ENCODE measurements at regions of chr19 and their contacts with region 1.

Region 1: GRCh38 chr19:57279418-57280066 is 743 bp upstream of the ZNF460 start:
- DNase-seq: peak; percentile 88 to 93 (median 90)
- H3K4me3 ChIP-seq: peak overlapping the region; percentile 99
- H3K27ac ChIP-seq: peak overlapping the region; percentile 91 to 96
- H3K4me1 ChIP-seq: peaks cover 4% of the 10 kb centered on the region
- H3K27me3 ChIP-seq: no peaks in the 10 kb centered on the region
- CTCF ChIP-seq: peak in 1 of 3 donors; percentile 8
- EP300 ChIP-seq: peak; percentile 98
- POLR2A ChIP-seq: peak; percentile 76

Region 2: GRCh38 chr19:57240311-57241090 is 39.0 kb before region 1 on chr19 and contains the start of gene ZNF805:
- intact Hi-C with region 1: loop called in 1 of 4 experiments (anchors 5 kb)
- DNase-seq: peak; percentile 95 to 97 (median 96)
- H3K4me3 ChIP-seq: peak within 1 kb of the TSS; percentile 98
- H3K27ac ChIP-seq: peak within 1 kb of the TSS; percentile 76 to 79
- H3K4me1 ChIP-seq: no peaks in the 10 kb centered on the region
- H3K27me3 ChIP-seq: no peaks in the 10 kb centered on the region
- CTCF ChIP-seq: peak in 2 of 3 donors; percentile 11 to 16
- EP300 ChIP-seq: no peak
- POLR2A ChIP-seq: peak; percentile 68
- total RNA-seq, gene ZNF805: 10.8 to 27.8 (median 19.4) TPM

Region 3: GRCh38 chr19:57350877-57351805 is 71.6 kb after region 1 on chr19 and contains the start of gene ZNF304:
- intact Hi-C with region 1: no loop called
- DNase-seq: peak; percentile 89 to 93 (median 90)
- H3K4me3 ChIP-seq: peak within 1 kb of the TSS; percentile 87
- H3K27ac ChIP-seq: no peak within 1 kb of the TSS
- H3K4me1 ChIP-seq: peaks cover 5% of the 10 kb centered on the region
- H3K27me3 ChIP-seq: no peaks in the 10 kb centered on the region
- CTCF ChIP-seq: no peak
- EP300 ChIP-seq: no peak
- POLR2A ChIP-seq: no peak
- total RNA-seq, gene ZNF304: 3.0 to 13.0 (median 9.1) TPM

Region 4: DNA sequence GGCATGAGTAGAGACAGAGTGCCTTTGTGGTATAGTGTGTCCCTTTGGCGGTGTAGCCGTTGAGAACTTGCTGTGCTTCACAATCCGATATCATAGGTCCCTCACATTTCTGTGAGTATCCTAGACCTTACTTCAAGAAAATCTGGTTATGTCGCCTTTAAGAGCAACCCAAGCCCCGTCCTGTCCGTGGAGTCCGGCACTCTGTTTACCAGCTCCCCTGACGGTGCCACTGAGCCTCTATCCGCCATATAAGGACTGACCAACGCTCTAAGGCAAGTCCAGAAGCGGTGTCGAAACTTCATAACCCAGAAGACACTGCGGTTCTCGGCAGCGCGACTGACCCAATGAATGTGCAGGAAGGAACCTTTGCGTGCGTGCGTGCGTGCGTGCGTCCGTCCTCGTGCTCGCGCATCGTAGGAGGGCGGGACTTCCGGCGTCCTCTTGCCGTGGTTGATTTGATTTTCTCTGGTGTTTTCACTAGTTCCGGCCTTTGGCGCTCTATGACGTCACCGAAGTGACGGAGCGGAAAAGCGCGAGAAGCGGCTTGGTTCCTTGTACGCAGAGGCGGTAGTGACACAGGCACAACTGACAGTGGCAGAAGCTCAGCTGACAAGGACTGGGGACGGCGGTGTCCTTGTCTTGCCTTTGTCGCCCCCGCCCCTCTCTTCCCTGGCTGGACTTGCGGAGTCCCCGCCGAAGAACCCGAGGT is 83.6 kb after region 1 on chr19 and contains the starts of genes TRAPPC2B and ZNF547:
- intact Hi-C with region 1: loop called in 1 of 4 experiments (anchors 5 kb)
- DNase-seq: peak; percentile 99 to 100 (median 99)
- H3K4me3 ChIP-seq: peak within 1 kb of the TSS; percentile 74
- H3K27ac ChIP-seq: peak within 1 kb of the TSS; percentile 70 to 98
- H3K4me1 ChIP-seq: peaks cover 6% of the 10 kb centered on the region
- H3K27me3 ChIP-seq: no peaks in the 10 kb centered on the region
- CTCF ChIP-seq: no peak
- EP300 ChIP-seq: peak; percentile 92
- POLR2A ChIP-seq: peak; percentile 76
- total RNA-seq, gene TRAPPC2B: 9.1 to 23.6 (median 11.6) TPM
- total RNA-seq, gene ZNF547: 1.2 to 4.7 (median 3.0) TPM

Measured in ovary (tissue), 10 donors.